CD14-positive monocyte (primary cell): ENCODE measurements at regions of chr19 and their contacts with region 1.

Region 1: GRCh38 chr19:45178262-45179071 is at the start of gene BLOC1S3:
- DNase-seq: peak; percentile 100
- H3K4me3 ChIP-seq: peak within 1 kb of the TSS; percentile 69 to 92 (median 82)
- H3K4me3 Mint-ChIP-seq: peak within 1 kb of the TSS; percentile 88 to 96
- H3K27ac ChIP-seq: peak within 1 kb of the TSS; percentile 92 to 99
- H3K27ac Mint-ChIP-seq: peak within 1 kb of the TSS; percentile 95 to 100 (median 98)
- H3K4me1 ChIP-seq: peaks cover 39 to 53% of the 10 kb centered on the region in 2 donors
- H3K4me1 Mint-ChIP-seq: peaks cover 49% of the 10 kb centered on the region
- H3K27me3 ChIP-seq: no peaks in the 10 kb centered on the region
- H3K27me3 Mint-ChIP-seq: peaks cover 0 to under 1% (median 0%) of the 10 kb centered on the region in 3 donors
- CTCF ChIP-seq: peak; percentile 25
- polyA plus RNA-seq, gene BLOC1S3: 2.9 to 6.7 (median 4.7) TPM

Region 2: GRCh38 chr19:45079063-45079910 is 99.2 kb before region 1 on chr19 and contains the start of gene GEMIN7:
- intact Hi-C with region 1: loop called in 1 of 2 experiments (anchors 5 kb)
- DNase-seq: peak; percentile 54 to 66 (median 57)
- H3K4me3 ChIP-seq: peak within 1 kb of the TSS; percentile 83 to 98 (median 85)
- H3K4me3 Mint-ChIP-seq: peak within 1 kb of the TSS; percentile 92 to 93
- H3K27ac ChIP-seq: peak within 1 kb of the TSS; percentile 12 to 88
- H3K27ac Mint-ChIP-seq: peak within 1 kb of the TSS; percentile 81 to 95 (median 87)
- H3K4me1 ChIP-seq: peaks cover 38 to 55% of the 10 kb centered on the region in 2 donors
- H3K4me1 Mint-ChIP-seq: peaks cover 40% of the 10 kb centered on the region
- H3K27me3 ChIP-seq: no peaks in the 10 kb centered on the region
- H3K27me3 Mint-ChIP-seq: peaks cover 0 to 2% (median 0%) of the 10 kb centered on the region in 3 donors
- CTCF ChIP-seq: no peak
- polyA plus RNA-seq, gene GEMIN7: 67.6 to 83.4 (median 78.4) TPM